GM12878 (cell line): ENCODE measurements at regions of chr7 and their contacts with region 1.

Region 1: DNA sequence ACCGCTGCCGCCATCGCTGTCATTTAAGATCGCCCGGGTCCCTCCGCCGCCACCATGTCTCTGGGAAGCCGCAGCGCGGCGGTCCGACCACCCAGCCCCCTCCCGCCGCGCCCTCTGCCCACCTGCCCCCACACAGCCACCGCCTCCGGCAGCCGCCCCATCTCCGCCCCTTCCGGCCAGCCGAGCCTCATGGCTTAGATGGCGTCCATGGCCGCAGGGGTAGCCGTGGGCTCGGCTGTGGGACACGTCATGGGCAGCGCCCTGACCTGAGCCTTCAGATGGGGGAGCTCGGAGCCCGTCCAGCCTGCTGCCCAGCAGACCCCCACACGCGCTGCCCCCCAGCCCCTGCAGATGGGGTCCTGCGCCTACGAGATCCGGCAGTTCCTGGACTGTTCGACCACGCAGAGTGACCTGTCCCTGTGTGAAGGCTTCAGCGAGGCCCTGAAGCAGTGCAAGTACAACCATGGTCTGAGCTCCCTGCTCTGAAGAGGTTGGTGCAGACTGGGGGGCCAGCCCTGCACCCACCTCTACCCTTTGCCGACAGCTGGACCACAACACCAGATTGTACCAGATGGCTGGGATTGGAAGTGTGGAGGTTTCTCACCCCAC is 38.0 kb upstream of the TARP start:
- DNase-seq: no peak
- ATAC-seq: peak; percentile 95
- H3K4me3 ChIP-seq: peak overlapping the region; percentile 71
- H3K27ac ChIP-seq: peak overlapping the region; percentile 35; the same call in 1 of the 2 replicates
- H3K4me1 ChIP-seq: peaks cover 20% of the 10 kb centered on the region
- H3K27me3 ChIP-seq: no peaks in the 10 kb centered on the region
- CTCF ChIP-seq: no peak
- EP300 ChIP-seq: no peak
- POLR2A ChIP-seq: peak; percentile 89
- RAD21 ChIP-seq: no peak

Region 2: DNA sequence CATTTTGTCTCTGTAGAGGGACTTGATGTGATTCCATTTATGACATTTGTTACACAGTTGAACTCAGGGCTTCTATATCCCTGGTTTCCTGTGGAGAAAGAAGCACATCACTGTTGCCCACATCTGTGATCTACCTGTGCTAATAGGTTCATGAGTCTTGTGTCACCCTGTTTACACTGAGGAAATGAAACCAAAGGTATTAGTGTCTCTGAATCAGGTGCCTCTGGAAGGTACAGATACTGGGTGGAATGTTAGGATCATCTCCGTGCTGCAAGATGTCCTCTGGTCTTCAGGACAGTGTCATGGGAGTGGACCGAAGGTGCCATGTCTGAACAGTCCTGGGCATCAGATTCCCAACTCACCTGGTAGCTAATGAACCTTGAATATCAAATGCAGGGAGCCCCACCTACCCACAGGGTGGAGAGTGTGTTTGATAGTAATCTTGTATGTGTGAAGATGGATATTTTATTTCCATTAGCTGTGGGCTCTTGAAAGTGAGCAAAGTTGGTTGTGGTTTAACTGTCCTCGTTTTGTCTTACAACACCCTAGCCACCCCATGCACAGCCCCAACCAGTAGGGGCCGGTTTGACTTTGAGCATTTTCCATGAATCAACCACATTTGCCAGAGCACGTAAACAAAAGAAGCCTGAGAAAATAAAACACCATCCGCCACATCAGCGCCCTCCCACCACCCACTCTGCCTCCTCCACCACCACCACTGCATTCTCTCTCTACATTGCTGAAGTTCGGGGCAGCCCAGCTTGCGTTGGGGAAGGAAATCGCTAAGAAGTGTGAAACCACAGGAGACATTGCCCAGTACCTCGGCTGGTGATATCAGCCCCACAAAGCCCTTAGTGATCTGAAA is 78.7 kb before region 1 on chr7:
- CTCF ChIA-PET with region 1: interaction called, 10 read pairs
- POLR2A ChIA-PET with region 1: no interaction called
- RAD21 ChIA-PET with region 1: interaction called, 32 read pairs
- SMC1A ChIA-PET with region 1: interaction called, 11 read pairs
- in situ Hi-C with region 1: no loop called
- intact Hi-C with region 1: no loop called
- DNase-seq: peak; percentile 82
- ATAC-seq: peak; percentile 96
- H3K4me3 ChIP-seq: no peak overlapping the region
- H3K27ac ChIP-seq: 0 out of 2 replicates have a peak overlapping the region, but pooled peaks have one; percentile 34
- H3K4me1 ChIP-seq: peaks cover 14% of the 10 kb centered on the region
- H3K27me3 ChIP-seq: no peaks in the 10 kb centered on the region
- CTCF ChIP-seq: peak in 1 of 3 experiments; percentile 17; a peak in 1 of 6 replicates
- EP300 ChIP-seq: peak in 1 of 2 experiments; percentile 82
- POLR2A ChIP-seq: no peak
- RAD21 ChIP-seq: no peak